Astrocyte of the cerebellum (primary cell): ENCODE measurements at regions of chr11 and their contacts with region 1.

Region 1: GRCh38 chr11:71251761-71252443 is 475 bp downstream of the SHANK2 start:
- DNase-seq: no peak
- H3K4me3 ChIP-seq: peak overlapping the region; percentile 51
- CTCF ChIP-seq: peak; percentile 43

Region 2: DNA sequence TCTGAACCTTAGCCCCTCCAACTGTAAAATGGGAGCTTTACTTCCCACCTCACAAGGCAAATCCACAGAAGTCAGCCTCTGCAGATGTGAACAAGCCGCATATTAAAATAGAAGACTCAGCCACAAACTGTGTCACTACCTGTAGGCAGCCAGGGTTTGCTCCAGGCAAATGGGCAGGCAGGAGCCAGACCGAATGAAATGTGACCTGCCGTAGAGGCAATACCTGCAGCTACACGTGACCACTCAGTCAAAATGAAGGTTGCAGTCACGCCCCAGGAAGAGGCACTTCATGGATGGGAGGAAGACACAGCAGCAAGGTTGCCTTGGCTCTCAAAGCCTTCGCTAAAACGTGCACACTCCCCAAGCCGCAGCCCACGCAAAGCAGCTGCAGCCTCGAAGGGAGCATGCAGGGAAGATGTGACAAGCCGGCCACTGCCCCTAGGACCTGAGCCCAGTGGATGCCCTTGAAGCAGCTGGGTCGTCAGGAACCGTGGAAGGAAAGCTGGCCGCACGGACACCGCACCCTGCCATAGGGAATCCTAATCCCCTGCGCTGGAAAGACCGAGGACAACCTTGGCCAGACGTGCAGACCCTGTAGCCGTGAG is 52.6 kb before region 1 on chr11:
- in situ Hi-C with region 1: loop called (anchors 5 kb)
- DNase-seq: no peak
- H3K4me3 ChIP-seq: no peak overlapping the region
- CTCF ChIP-seq: no peak

Region 3: DNA sequence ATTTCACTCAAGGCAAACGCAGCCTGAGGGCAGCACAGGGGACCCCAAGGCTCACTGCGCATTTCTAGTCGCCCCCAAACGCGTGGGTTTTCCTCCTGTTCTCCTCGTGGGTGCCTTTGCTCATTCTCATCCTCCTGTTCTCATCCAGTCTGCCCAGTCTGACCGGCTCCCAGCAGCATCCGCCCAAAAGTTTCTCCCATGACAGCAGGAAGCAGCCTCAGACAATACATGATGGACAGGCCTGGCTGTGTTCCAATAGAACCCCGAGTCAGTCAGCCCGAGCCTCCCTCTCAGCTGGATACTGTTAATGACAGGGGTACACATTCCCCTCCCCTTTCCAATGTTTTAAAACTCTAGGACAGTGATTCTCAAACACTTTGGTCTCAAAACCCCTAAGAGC is 252.6 kb after region 1 on chr11:
- in situ Hi-C with region 1: no loop called
- DNase-seq: no peak
- H3K4me3 ChIP-seq: no peak overlapping the region
- CTCF ChIP-seq: no peak